T-cell (primary cell): ENCODE measurements at regions of chr7 and their contacts with region 1.

Region 1: GRCh38 chr7:66033471-66034385 is 41.9 kb upstream of the ASL start:
- DNase-seq: peak in 7 of 35 experiments; percentile 2 to 28 (median 16)
- ATAC-seq: peak in 1 of 4 experiments; percentile 28
- H3K4me3 ChIP-seq: no peak overlapping the region
- H3K4me3 Mint-ChIP-seq: no peak overlapping the region
- H3K27ac ChIP-seq: peak overlapping the region; percentile 5
- H3K27ac Mint-ChIP-seq: peak overlapping the region in 1 of 2 donors; percentile 15
- H3K4me1 ChIP-seq: no peaks in the 10 kb centered on the region
- H3K4me1 Mint-ChIP-seq: peaks cover 0 to 9% (median 2%) of the 10 kb centered on the region in 3 donors
- H3K27me3 ChIP-seq: no peaks in the 10 kb centered on the region
- H3K27me3 Mint-ChIP-seq: peaks cover 0 to 4% of the 10 kb centered on the region in 2 donors

Region 2: GRCh38 chr7:65809259-65809981 is 224.3 kb before region 1 on chr7:
- CTCF ChIA-PET with region 1: interaction called in 1 of 2 experiments, 13 read pairs
- POLR2A ChIA-PET with region 1: no interaction called
- DNase-seq: no peak
- ATAC-seq: no peak
- H3K4me3 ChIP-seq: no peak overlapping the region
- H3K4me3 Mint-ChIP-seq: no peak overlapping the region
- H3K27ac ChIP-seq: no peak overlapping the region
- H3K27ac Mint-ChIP-seq: no peak overlapping the region
- H3K4me1 ChIP-seq: no peaks in the 10 kb centered on the region
- H3K4me1 Mint-ChIP-seq: no peaks in the 10 kb centered on the region
- H3K27me3 ChIP-seq: no peaks in the 10 kb centered on the region
- H3K27me3 Mint-ChIP-seq: no peaks in the 10 kb centered on the region

Region 3: GRCh38 chr7:66055321-66055956 is 21.7 kb after region 1 on chr7:
- CTCF ChIA-PET with region 1: no interaction called
- POLR2A ChIA-PET with region 1: no interaction called
- DNase-seq: no peak
- ATAC-seq: no peak
- H3K4me3 ChIP-seq: no peak overlapping the region
- H3K4me3 Mint-ChIP-seq: no peak overlapping the region
- H3K27ac ChIP-seq: no peak overlapping the region
- H3K27ac Mint-ChIP-seq: no peak overlapping the region
- H3K4me1 ChIP-seq: no peaks in the 10 kb centered on the region
- H3K4me1 Mint-ChIP-seq: peaks cover 0 to 3% (median 3%) of the 10 kb centered on the region in 3 donors
- H3K27me3 ChIP-seq: no peaks in the 10 kb centered on the region
- H3K27me3 Mint-ChIP-seq: no peaks in the 10 kb centered on the region

Region 4: DNA sequence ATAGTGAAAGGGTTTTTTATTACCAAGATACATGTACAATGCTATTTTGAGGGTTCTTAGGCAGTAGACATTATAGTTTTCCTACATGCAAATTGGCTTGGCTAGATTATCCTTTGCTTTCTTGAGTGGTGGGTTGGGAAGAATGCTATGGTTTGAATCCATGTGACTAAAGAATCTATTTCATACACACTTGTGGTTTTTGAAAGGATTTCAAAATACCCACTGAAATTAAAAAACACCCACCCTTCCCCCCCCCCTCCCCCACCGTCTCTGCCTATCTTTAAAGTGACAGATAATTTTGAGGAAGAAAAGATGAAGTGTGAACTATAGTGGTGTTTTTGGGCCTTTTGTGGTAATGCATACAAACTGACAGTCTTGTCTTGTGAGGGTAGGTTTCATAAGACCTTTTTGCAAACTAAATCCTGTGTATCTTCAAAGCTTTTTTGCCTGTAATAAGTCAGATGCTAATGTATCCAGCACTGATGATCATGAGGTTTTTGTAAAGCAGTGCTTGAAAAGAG is 262.3 kb after region 1 on chr7:
- CTCF ChIA-PET with region 1: no interaction called
- POLR2A ChIA-PET with region 1: no interaction called
- DNase-seq: no peak
- ATAC-seq: no peak
- H3K4me3 ChIP-seq: no peak overlapping the region
- H3K4me3 Mint-ChIP-seq: no peak overlapping the region
- H3K27ac ChIP-seq: no peak overlapping the region
- H3K27ac Mint-ChIP-seq: no peak overlapping the region
- H3K4me1 ChIP-seq: no peaks in the 10 kb centered on the region
- H3K4me1 Mint-ChIP-seq: peaks cover 0 to 3% (median 0%) of the 10 kb centered on the region in 3 donors
- H3K27me3 ChIP-seq: no peaks in the 10 kb centered on the region
- H3K27me3 Mint-ChIP-seq: no peaks in the 10 kb centered on the region

Region 5: DNA sequence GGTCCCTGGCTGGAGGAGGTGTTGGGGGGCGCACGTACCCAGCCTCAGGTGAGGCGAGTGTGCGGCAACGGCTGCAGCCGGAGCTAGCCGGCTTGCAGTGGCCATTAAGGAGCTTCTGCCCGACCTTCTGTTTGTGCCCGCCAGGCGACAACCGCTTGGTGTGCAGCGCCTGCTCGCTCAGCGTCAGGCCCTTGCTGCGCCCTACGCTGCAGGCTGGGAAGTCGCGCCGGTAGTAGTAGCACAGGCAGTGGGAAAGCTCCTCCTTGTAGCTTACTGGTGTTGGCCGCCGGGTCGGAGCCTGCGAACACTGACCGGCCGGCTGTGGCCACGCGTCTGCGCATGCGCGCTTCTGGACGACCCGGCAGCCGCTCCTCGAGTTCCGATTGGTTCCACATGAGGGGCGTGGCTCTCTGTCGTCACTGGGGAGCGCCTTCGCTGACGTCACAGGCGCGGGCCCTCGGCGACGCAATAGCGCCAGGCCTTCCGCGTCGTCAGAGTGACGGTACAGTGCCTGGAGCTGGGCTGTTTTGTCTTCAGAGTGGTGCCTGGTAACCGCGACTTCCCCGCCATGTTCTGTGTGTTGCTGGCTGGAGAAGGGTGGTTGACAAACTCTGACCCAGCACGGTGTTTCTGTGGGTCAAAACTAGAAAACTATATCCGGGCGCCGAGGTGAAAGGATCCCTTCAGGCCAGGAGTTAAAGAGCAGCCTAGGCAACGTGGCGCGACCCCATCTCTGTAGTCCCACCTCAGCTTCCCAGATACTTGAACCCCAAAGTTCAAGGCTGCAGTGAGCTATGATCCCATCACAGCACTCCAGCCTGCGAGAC is 811.0 kb after region 1 on chr7:
- CTCF ChIA-PET with region 1: no interaction called
- POLR2A ChIA-PET with region 1: interaction called in 1 of 2 experiments, 11 read pairs
- DNase-seq: peak; percentile 92 to 100 (median 98)
- ATAC-seq: peak; percentile 89 to 92 (median 90)
- H3K4me3 ChIP-seq: peak overlapping the region; percentile 89 to 92
- H3K4me3 Mint-ChIP-seq: peak overlapping the region; percentile 91 to 98 (median 96)
- H3K27ac ChIP-seq: peak overlapping the region; percentile 99
- H3K27ac Mint-ChIP-seq: peak overlapping the region; percentile 98 to 100
- H3K4me1 ChIP-seq: peaks cover 9 to 22% of the 10 kb centered on the region in 2 experiments
- H3K4me1 Mint-ChIP-seq: peaks cover 20 to 31% (median 27%) of the 10 kb centered on the region in 3 donors
- H3K27me3 ChIP-seq: no peaks in the 10 kb centered on the region
- H3K27me3 Mint-ChIP-seq: no peaks in the 10 kb centered on the region